SK-N-SH (cell line): ENCODE measurements at regions of chr20 and their contacts with region 1.

Region 1: DNA sequence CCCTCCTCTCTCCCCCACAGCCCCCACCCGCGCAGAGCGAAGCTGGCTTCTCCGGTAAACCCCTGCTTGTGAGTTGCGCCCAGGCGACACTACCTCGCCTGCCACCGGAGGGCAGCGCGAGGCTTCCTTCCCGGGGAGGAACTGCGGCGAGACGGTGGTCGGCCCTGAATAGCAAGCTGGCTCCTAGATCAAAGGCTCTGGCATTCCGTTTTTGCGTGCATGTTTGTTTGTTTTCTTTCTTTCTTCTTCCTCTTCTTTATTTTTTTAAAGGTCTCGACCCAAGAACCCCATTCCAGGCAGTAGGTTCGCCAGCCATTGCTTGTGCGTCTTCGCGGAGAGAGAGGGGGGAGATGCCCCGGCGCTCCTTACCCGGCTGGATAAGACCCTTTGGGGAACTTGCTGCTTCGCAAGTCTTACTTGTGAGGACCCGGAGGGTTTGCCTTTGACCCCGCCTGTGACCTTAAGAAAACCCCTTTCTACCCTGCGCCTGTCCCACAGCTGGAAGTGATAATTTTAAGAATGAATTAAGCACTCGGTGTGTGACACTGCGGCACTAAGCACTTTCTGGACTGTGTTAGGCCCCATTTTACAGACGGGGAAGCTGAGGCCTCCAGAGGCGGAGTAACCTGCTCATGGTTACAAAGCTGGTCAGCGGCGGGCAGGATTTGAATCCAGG is 92.7 kb upstream of the SIRPA start:
- DNase-seq: peak; percentile 87
- H3K4me3 ChIP-seq: peak overlapping the region; percentile 43 to 55
- H3K27ac ChIP-seq: no peak overlapping the region
- H3K4me1 ChIP-seq: peaks cover 7 to 10% of the 10 kb centered on the region in 2 experiments; a peak in 2 of 4 replicates
- H3K27me3 ChIP-seq: no peaks in the 10 kb centered on the region
- CTCF ChIP-seq: peak; percentile 74
- EP300 ChIP-seq: no peak
- RAD21 ChIP-seq: peak; percentile 77

Region 2: GRCh38 chr20:1669304-1669703 is 133.2 kb before region 1 on chr20:
- CTCF ChIA-PET with region 1: no interaction called
- POLR2A ChIA-PET with region 1: no interaction called
- DNase-seq: no peak
- H3K4me3 ChIP-seq: no peak overlapping the region
- H3K27ac ChIP-seq: no peak overlapping the region
- H3K4me1 ChIP-seq: no peaks in the 10 kb centered on the region
- H3K27me3 ChIP-seq: no peaks in the 10 kb centered on the region
- CTCF ChIP-seq: no peak; the same call in 1 of the 2 replicates
- EP300 ChIP-seq: no peak
- RAD21 ChIP-seq: no peak

Region 3: GRCh38 chr20:1776681-1777475 is 25.6 kb before region 1 on chr20:
- CTCF ChIA-PET with region 1: interaction called, 22 read pairs
- POLR2A ChIA-PET with region 1: no interaction called
- DNase-seq: peak; percentile 84
- H3K4me3 ChIP-seq: peak overlapping the region; percentile 75 to 98
- H3K27ac ChIP-seq: peak overlapping the region; percentile 48 to 55; a peak in 2 of 4 replicates
- H3K4me1 ChIP-seq: peaks cover 6 to 7% of the 10 kb centered on the region in 2 experiments; a peak in 3 of 4 replicates
- H3K27me3 ChIP-seq: 0 out of 2 replicates have a peak, but pooled peaks cover 7% of the 10 kb centered on the region
- CTCF ChIP-seq: peak; percentile 73
- EP300 ChIP-seq: peak in 1 of 2 experiments; percentile 15; a peak in 1 of 4 replicates
- RAD21 ChIP-seq: peak; percentile 71

Region 4: GRCh38 chr20:1907586-1907985 is 105.1 kb after region 1 on chr20:
- CTCF ChIA-PET with region 1: interaction called, 13 read pairs
- POLR2A ChIA-PET with region 1: no interaction called
- DNase-seq: no peak
- H3K4me3 ChIP-seq: no peak overlapping the region
- H3K27ac ChIP-seq: no peak overlapping the region
- H3K4me1 ChIP-seq: peaks cover 0 to 13% of the 10 kb centered on the region in 2 experiments; a peak in 1 of 4 replicates
- H3K27me3 ChIP-seq: no peaks in the 10 kb centered on the region
- CTCF ChIP-seq: no peak
- EP300 ChIP-seq: no peak
- RAD21 ChIP-seq: no peak

Region 5: DNA sequence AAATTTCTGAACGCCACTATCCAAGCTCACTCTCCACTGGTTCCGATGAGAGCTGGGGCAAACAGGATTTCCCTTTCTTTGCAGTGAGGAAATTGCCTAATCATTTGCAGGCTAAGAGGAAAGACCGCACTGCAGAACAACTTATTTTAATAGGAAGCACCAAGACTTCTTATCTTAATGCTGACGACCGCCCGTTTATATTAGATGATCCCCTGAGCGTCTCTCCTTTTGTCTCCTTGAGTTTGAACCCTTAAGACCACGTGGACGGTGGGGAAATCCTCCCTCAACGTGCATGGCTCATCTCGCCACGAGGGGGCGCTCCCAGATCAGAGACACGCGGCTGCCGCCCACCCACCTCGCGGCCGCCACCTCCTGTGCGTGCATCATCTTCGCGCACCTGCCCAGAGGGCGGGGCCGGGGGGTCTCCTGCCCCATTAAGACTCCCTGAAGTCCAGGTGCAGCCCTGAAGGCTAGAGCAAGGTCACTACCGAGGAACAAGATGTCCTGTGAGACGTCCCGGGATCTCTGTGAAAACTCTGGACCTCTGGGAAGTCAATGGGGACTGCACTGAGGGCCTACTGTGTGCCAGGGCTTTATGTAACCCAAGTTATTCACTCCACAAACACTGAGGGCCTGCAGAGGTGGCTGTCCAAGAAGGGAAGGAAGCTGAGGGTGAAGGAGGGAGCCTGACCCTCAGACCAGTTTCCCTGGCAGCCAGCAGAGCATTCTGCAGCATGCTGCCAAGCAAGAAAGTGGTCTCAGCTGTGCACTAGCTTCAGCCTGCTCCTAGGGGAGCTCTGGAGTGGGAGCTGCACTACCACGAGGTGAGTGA is 163.2 kb after region 1 on chr20:
- CTCF ChIA-PET with region 1: interaction called, 18 read pairs
- POLR2A ChIA-PET with region 1: no interaction called
- DNase-seq: peak; percentile 84
- H3K4me3 ChIP-seq: no peak overlapping the region
- H3K27ac ChIP-seq: no peak overlapping the region
- H3K4me1 ChIP-seq: no peaks in the 10 kb centered on the region; a peak in 1 of 4 replicates
- H3K27me3 ChIP-seq: peaks cover 34% of the 10 kb centered on the region; the same call in 1 of the 2 replicates
- CTCF ChIP-seq: peak; percentile 93
- EP300 ChIP-seq: no peak
- RAD21 ChIP-seq: peak; percentile 79